ENCODE measurements at regions of chr1 and their contacts with region 1.

Region 1: DNA sequence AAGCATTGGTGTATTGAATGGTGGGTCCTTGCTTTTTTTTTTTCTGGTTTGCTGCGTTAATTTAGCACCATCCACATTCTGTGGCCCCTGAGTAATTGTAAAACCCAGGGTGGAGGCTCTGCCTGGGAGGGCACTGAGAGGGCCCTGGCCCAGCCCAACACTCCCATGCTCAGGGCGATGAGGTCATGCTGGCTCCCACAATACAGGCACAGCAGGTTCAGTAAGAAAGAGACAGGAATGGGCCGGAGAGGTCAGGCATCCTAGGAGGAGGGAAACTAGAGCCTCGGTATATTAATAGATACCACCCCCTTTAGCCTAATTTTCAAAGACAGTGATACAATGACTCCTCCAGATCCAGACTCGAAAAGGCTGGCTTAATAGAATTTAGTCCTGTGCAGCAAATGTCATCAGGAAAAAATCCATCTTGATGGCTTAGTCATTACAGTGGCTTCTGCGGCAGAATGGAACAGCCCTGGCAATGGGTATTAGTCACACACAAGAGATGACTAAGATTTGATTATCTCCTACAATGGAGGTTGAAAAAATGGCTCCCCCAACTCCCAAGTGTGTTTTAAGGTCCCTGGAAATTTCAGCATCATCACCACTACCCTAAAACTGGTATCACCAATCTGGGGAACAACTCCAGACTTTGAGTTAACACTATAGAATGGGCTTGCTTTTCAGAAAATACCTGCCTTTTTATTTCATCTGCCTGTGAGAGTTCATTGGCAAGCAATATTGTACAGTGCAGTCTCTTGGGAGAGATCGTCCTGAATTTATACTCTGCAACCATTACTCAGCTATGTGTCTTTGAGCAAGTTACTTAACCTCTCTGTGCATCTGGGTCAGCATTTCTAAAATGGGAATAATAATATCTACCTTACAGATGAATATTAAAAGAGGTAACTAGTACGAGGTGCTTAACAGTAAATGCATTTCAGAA is 43.9 kb upstream of the LYST start:
- DNase-seq: peak in 1 of 2 donors; percentile 78
- H3K4me3 ChIP-seq: no peak overlapping the region
- H3K27ac ChIP-seq: peak overlapping the region; percentile 82 to 83
- H3K4me1 ChIP-seq: peaks cover 9 to 15% of the 10 kb centered on the region in 2 donors
- H3K27me3 ChIP-seq: no peaks in the 10 kb centered on the region
- CTCF ChIP-seq: no peak

Region 2: GRCh38 chr1:235883261-235883927 is 27.2 kb before region 1 on chr1:
- intact Hi-C with region 1: loop called (anchors 1 kb)
- DNase-seq: peak; percentile 67 to 95
- H3K4me3 ChIP-seq: peak overlapping the region; percentile 27 to 51
- H3K27ac ChIP-seq: peak overlapping the region; percentile 65 to 73
- H3K4me1 ChIP-seq: peaks cover 0 to 3% of the 10 kb centered on the region in 2 donors
- H3K27me3 ChIP-seq: no peaks in the 10 kb centered on the region
- CTCF ChIP-seq: no peak

Region 3: DNA sequence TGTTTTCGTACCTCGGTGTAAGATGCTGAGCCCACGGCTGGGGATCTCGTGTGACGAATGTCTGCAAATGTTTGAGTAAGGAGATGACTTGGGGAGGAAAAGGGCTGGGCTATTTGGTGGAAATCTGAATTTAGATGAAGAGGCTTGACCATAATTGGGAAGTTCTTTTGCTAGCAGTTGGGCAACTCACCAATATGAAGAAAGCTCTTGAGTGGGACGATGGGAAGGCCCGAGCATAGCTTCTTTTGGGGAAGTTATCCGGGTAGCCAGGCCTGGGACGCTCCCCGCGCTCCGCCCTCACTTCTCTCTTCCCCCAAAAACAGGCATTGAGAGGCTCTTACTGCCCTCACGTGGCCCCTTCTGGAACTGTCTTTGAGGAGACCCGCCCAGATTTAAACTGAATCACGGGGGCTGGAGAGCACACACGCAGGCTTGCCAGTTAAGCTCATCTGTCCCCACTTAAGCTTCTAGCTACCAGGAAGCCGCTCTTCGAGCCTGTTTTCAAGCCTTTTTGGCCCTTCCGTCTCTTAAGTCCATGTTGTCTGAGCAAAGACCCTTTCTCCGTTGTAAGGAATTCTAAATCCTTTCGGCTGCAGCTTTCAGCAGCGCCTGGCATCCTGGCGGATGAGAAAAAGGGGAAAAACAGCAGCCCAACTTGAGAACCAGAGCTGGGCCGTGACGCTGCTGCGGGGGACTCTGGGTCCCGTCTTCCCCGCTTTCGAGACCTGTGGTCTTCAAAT is 61.1 kb after region 1 on chr1:
- intact Hi-C with region 1: loop called (anchors 2 kb)
- DNase-seq: peak; percentile 83 to 97
- H3K4me3 ChIP-seq: peak overlapping the region; percentile 52 to 66
- H3K27ac ChIP-seq: peak overlapping the region; percentile 95 to 96
- H3K4me1 ChIP-seq: peaks cover 4 to 20% of the 10 kb centered on the region in 2 donors
- H3K27me3 ChIP-seq: no peaks in the 10 kb centered on the region
- CTCF ChIP-seq: peak; percentile 78 to 85 (median 84)

Region 4: GRCh38 chr1:236064674-236065508 is 154.3 kb after region 1 on chr1 and contains the start of gene NID1:
- intact Hi-C with region 1: loop called (anchors 5 kb)
- DNase-seq: peak; percentile 56 to 92
- H3K4me3 ChIP-seq: peak within 1 kb of the TSS; percentile 77 to 81
- H3K27ac ChIP-seq: peak within 1 kb of the TSS; percentile 91 to 95
- H3K4me1 ChIP-seq: peaks cover 0 to 15% of the 10 kb centered on the region in 2 donors
- H3K27me3 ChIP-seq: no peaks in the 10 kb centered on the region
- CTCF ChIP-seq: peak; percentile 35 to 48 (median 38)
- total RNA-seq, gene NID1: 172 TPM

Measured in ascending aorta (tissue), 2 donors.